Activated CD4-positive, alpha-beta memory T cell treated with anti-CD3 and anti-CD28 coated beads, Interleukin-2, amount 10 ng/mL, durations not matched to agents 7 days and 5 days (primary cell): ENCODE measurements at regions of chr9 and their contacts with region 1.

Region 1: DNA sequence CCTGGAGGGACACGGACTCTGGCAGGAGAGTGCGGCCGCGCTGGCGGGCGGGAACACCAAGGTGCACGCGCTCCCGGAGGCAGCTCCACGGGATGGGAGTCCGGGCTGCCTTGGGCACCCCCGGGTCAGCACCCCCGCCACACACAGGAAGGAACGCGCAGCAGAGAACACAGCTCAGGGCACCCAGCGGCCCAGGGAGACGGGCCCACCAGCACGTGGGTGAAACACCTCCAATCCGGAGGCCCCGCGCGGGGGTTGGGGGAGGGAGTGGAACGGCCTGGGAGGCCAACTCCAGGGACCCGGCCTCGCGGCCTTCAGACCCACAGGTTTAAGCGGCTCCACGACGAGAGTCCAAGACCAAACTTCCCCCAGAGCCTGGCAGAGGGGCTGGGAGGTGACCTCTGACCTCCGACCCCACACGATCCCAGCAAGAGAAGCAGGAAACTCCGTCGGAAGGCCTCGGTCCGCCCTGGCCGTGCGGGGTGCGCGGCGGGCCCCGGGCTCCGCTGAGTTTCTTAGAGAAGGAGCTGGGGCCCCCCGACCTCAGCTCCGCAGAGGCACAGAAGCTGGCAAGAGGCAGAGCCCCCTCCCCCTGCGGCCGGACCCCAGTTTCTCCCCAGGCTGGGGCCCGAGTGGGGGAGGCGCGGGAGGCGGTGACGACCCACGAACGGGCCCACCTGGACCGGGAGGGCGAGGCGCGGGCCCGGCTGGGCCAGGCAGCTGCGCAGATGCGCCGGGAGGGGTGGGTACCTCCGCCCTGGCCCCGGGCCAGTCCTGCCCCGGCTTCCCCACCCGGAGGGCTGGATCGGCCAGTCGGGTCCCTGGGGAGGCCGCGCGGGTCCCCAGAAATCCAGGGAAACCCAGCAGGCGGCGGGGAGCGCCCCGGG is 851 bp downstream of the NACC2 start:
- DNase-seq: peak; percentile 61
- H3K4me3 Mint-ChIP-seq: peak overlapping the region; percentile 73
- H3K27ac Mint-ChIP-seq: no peak overlapping the region
- H3K4me1 Mint-ChIP-seq: peaks cover 24% of the 10 kb centered on the region
- H3K27me3 Mint-ChIP-seq: no peaks in the 10 kb centered on the region

Region 2: DNA sequence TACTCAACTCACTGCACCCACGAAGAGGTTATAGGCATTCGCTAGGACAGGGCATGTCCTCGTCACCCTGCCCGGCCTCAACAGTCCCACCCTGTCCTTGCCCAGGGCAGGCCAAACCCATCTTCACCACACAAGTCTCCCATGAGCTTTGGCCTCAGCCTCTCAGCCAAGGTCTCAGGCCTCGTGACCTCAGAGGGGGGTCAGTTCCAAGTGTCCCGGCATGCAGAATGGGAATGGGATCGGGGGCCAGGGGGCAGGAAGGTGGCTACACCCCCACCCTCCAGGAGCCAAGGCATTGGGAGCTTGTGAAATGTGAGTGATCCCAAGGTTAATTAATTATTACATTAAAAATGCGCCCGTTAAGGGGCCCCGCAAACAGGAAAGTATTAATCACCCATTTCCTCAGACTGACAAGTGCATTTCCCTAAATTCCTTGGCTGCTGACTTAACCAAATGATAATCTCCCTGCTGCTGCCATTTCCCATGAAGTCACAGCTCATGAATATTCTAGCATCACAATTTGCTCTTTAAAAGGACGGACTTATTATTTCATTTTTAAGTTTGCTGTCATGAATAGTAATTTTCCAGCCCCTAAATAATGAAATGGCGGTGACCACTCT is 125.1 kb before region 1 on chr9:
- CTCF ChIA-PET with region 1: interaction called, 11 read pairs
- POLR2A ChIA-PET with region 1: no interaction called
- DNase-seq: no peak
- H3K4me3 Mint-ChIP-seq: no peak overlapping the region
- H3K27ac Mint-ChIP-seq: no peak overlapping the region
- H3K4me1 Mint-ChIP-seq: peaks cover 6% of the 10 kb centered on the region
- H3K27me3 Mint-ChIP-seq: peaks cover 3% of the 10 kb centered on the region

Region 3: GRCh38 chr9:136043441-136043991 is 50.7 kb before region 1 on chr9:
- CTCF ChIA-PET with region 1: no interaction called
- POLR2A ChIA-PET with region 1: no interaction called
- DNase-seq: no peak
- H3K4me3 Mint-ChIP-seq: no peak overlapping the region
- H3K27ac Mint-ChIP-seq: no peak overlapping the region
- H3K4me1 Mint-ChIP-seq: peaks cover 1% of the 10 kb centered on the region
- H3K27me3 Mint-ChIP-seq: no peaks in the 10 kb centered on the region

Region 4: GRCh38 chr9:136109351-136110081 is 15.3 kb after region 1 on chr9:
- CTCF ChIA-PET with region 1: interaction called, 4 read pairs
- POLR2A ChIA-PET with region 1: interaction called, 123 read pairs
- DNase-seq: peak; percentile 96
- H3K4me3 Mint-ChIP-seq: peak overlapping the region; percentile 86
- H3K27ac Mint-ChIP-seq: peak overlapping the region; percentile 99
- H3K4me1 Mint-ChIP-seq: peaks cover 83% of the 10 kb centered on the region
- H3K27me3 Mint-ChIP-seq: no peaks in the 10 kb centered on the region

Region 5: GRCh38 chr9:136118320-136119060 is 24.3 kb after region 1 on chr9 and contains the start of gene TMEM250:
- CTCF ChIA-PET with region 1: interaction called, 40 read pairs
- POLR2A ChIA-PET with region 1: interaction called, 21 read pairs
- DNase-seq: peak; percentile 97
- H3K4me3 Mint-ChIP-seq: peak within 1 kb of the TSS; percentile 81
- H3K27ac Mint-ChIP-seq: peak within 1 kb of the TSS; percentile 74
- H3K4me1 Mint-ChIP-seq: peaks cover 32% of the 10 kb centered on the region
- H3K27me3 Mint-ChIP-seq: no peaks in the 10 kb centered on the region
- total RNA-seq, gene TMEM250: 47.0 to 49.0 TPM

Region 6: GRCh38 chr9:136242908-136243525 is 148.8 kb after region 1 on chr9:
- CTCF ChIA-PET with region 1: no interaction called
- POLR2A ChIA-PET with region 1: no interaction called
- DNase-seq: no peak
- H3K4me3 Mint-ChIP-seq: no peak overlapping the region
- H3K27ac Mint-ChIP-seq: peak overlapping the region; percentile 84
- H3K4me1 Mint-ChIP-seq: peaks cover 32% of the 10 kb centered on the region
- H3K27me3 Mint-ChIP-seq: peaks cover 4% of the 10 kb centered on the region